KBM-7 (cell line): ENCODE measurements at regions of chr2 and their contacts with region 1.

Region 1: DNA sequence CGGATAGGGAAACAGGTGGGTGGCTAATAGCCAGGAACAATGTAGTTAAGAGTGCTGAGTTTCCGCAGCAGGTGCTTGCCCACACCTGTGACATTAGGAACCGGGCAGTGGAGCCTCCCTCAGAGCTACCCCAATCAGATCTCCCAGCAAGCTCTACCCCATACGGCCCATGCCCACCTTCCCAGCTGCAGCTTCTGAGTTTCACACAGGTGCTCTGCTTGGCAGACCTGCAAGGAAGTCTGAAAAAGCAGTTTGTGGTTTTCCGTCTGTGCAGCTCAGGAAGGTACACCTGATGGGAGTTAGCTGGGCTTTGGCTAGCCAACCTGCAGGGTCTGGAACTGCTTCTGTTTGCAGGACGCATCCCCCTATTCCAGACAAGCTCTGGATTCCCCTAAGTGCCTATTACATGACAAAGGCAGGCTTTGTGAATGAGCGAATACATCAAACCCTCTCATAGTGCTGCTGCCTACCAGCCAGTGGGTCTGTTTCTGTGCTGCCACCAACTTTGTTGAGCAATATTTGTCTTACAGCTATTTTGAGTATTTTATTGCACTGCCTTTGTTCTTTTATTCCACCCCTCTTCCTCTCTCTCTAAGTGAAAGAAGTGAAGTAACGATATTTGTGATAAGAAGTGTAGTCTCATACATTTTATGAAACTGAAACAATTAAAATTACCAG is 24.7 kb upstream of the CEP68 start:
- DNase-seq: peak; percentile 42

Region 2: DNA sequence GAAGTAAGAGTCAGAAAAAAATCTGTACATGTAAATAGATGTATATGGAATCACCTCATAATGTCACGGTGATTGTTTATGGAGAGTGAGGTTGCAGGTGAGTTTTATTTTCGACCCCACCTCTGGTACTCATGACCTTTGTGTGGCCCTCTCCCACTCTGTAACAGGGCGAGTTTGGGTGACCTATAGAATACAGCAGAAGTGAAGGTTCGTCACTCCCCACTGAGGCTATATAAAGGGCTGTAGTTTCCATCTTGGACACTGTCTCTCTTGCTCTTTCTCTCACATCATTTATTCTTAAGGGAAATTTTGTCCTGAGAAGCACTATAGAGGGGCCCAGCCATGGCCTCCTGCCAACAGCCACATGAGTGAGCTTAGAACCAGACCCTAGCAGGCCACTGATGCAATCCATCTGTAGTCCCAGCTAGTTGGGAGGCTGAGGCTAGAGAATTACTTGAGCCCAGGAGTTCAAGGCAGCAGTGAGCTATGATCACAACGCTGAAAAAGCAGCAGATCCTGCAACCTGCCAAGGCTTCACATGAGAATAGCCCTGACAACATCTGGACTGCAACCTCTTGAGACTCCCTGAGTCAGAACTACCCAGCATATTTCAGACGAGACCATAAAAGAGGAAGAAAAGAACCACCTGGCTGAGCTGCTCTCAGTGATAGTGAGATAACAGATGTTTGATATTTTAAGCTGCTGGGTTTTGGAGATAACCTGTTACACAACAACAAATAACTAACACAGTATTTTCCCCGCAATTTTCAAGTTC is 116.6 kb before region 1 on chr2:
- in situ Hi-C with region 1: loop called (anchors 10 kb)
- DNase-seq: peak; percentile 84